HCT116 (cell line): ENCODE measurements at regions of chrX and their contacts with region 1.

Region 1: DNA sequence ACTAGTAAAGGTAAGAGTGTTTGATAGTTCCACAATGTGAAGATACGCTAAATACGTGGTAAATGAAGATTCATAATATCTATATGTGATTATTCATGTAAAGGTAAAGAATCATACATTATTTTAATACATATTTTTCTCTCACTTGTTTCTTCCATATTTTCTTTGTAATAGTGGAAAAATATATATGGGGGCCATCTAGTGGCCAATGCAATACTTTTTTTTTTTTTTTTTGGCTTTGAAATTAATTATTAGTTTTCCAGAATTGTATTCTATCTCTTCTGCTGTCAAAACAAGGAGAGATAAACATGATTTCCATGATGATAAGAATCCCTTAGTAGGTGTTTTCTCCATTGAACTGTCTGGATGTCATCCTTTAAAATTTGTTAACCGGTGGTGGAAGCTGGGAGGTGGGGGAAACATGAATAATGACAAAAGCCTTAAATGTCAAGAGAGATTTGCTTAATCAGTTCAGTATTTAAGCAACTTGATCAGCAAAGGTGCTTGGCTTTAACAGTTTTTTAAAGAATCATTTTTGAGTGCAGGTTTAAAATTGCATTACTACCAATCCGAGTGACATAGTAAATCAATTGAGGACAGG is 508.7 kb upstream of the HTR2C start:
- DNase-seq: no peak
- ATAC-seq: no peak
- H3K4me3 ChIP-seq: no peak overlapping the region
- H3K27ac ChIP-seq: no peak overlapping the region
- H3K4me1 ChIP-seq: no peaks in the 10 kb centered on the region
- H3K27me3 ChIP-seq: no peaks in the 10 kb centered on the region
- CTCF ChIP-seq: peak; percentile 11 to 53 (median 16); a peak in 3 of 6 replicates
- POLR2A ChIP-seq: no peak
- RAD21 ChIP-seq: peak; percentile 25; the same call in 1 of the 2 replicates

Region 2: DNA sequence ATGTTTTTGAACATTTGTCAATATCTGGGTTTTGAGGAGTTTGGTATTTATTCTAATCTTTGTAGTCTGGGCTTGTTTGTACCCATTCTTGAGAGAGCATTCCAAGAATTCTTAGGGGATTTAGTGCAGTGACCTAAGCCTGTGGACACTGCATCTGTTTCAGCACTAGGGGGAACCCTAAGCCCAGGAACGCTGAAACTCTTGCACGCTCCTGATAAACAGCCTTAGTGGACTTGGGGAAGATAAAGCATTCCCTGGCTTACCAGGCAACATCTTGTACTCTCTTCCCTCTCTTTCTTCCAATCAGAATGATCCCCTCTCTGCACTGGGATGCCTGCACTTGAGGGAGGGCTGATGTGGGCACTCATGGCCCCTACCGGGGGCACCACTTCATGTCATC is 146.2 kb before region 1 on chrX:
- CTCF ChIA-PET with region 1: no interaction called
- POLR2A ChIA-PET with region 1: no interaction called
- RAD21 ChIA-PET with region 1: no interaction called
- intact Hi-C with region 1: loop called (anchors 5 kb)
- DNase-seq: peak; percentile 43
- ATAC-seq: peak; percentile 91
- H3K4me3 ChIP-seq: no peak overlapping the region
- H3K27ac ChIP-seq: no peak overlapping the region
- H3K4me1 ChIP-seq: no peaks in the 10 kb centered on the region
- H3K27me3 ChIP-seq: no peaks in the 10 kb centered on the region
- CTCF ChIP-seq: peak; percentile 36 to 69 (median 66); a peak in 5 of 6 replicates
- POLR2A ChIP-seq: no peak
- RAD21 ChIP-seq: peak; percentile 78

Region 3: DNA sequence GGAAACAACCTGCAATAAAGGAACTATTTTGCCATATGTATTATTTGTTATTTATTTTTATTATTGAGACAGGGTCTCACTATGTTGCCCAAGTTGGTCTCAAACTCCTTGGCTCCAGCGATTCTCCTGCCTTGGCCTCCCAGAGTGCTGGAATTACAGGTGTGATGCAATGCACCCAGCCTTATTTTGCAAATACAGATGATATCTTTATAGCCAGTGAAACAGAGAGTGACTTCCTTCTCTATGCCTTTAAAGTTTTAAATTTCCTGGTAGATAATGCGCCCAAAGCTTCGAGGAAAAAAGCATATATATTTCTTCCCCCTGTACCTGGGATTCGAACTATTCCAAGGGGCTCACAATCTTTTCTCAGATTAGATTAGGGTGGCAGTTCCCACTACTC is 92.4 kb before region 1 on chrX:
- CTCF ChIA-PET with region 1: no interaction called
- POLR2A ChIA-PET with region 1: no interaction called
- RAD21 ChIA-PET with region 1: no interaction called
- intact Hi-C with region 1: no loop called
- DNase-seq: no peak
- ATAC-seq: no peak
- H3K4me3 ChIP-seq: no peak overlapping the region
- H3K27ac ChIP-seq: no peak overlapping the region
- H3K4me1 ChIP-seq: no peaks in the 10 kb centered on the region
- H3K27me3 ChIP-seq: no peaks in the 10 kb centered on the region
- CTCF ChIP-seq: no peak
- POLR2A ChIP-seq: no peak
- RAD21 ChIP-seq: no peak